ENCODE measurements at regions of chr1 and their contacts with region 1.

Region 1: GRCh38 chr1:80509950-80510522 is 1290.7 kb upstream of the ADGRL2 start:
- DNase-seq: no peak
- ATAC-seq: no peak
- H3K4me3 ChIP-seq: no peak overlapping the region
- H3K4me3 Mint-ChIP-seq: no peak overlapping the region
- H3K27ac ChIP-seq: no peak overlapping the region
- H3K27ac Mint-ChIP-seq: no peak overlapping the region
- H3K4me1 ChIP-seq: no peaks in the 10 kb centered on the region
- H3K4me1 Mint-ChIP-seq: no peaks in the 10 kb centered on the region
- H3K27me3 ChIP-seq: no peaks in the 10 kb centered on the region
- H3K27me3 Mint-ChIP-seq: no peaks in the 10 kb centered on the region

Region 2: GRCh38 chr1:80498673-80499072 is 11.4 kb before region 1 on chr1:
- CTCF ChIA-PET with region 1: interaction called in 1 of 2 experiments, 10 read pairs
- POLR2A ChIA-PET with region 1: interaction called in 1 of 2 experiments, 3 read pairs
- DNase-seq: no peak
- ATAC-seq: no peak
- H3K4me3 ChIP-seq: no peak overlapping the region
- H3K4me3 Mint-ChIP-seq: no peak overlapping the region
- H3K27ac ChIP-seq: no peak overlapping the region
- H3K27ac Mint-ChIP-seq: no peak overlapping the region
- H3K4me1 ChIP-seq: no peaks in the 10 kb centered on the region
- H3K4me1 Mint-ChIP-seq: no peaks in the 10 kb centered on the region
- H3K27me3 ChIP-seq: no peaks in the 10 kb centered on the region
- H3K27me3 Mint-ChIP-seq: no peaks in the 10 kb centered on the region

Region 3: GRCh38 chr1:80523861-80524260 is 13.8 kb after region 1 on chr1:
- CTCF ChIA-PET with region 1: no interaction called
- POLR2A ChIA-PET with region 1: no interaction called
- DNase-seq: no peak
- ATAC-seq: no peak
- H3K4me3 ChIP-seq: no peak overlapping the region
- H3K4me3 Mint-ChIP-seq: no peak overlapping the region
- H3K27ac ChIP-seq: no peak overlapping the region
- H3K27ac Mint-ChIP-seq: no peak overlapping the region
- H3K4me1 ChIP-seq: no peaks in the 10 kb centered on the region
- H3K4me1 Mint-ChIP-seq: no peaks in the 10 kb centered on the region
- H3K27me3 ChIP-seq: peaks cover 0 to 2% of the 10 kb centered on the region in 2 experiments
- H3K27me3 Mint-ChIP-seq: no peaks in the 10 kb centered on the region

Region 4: DNA sequence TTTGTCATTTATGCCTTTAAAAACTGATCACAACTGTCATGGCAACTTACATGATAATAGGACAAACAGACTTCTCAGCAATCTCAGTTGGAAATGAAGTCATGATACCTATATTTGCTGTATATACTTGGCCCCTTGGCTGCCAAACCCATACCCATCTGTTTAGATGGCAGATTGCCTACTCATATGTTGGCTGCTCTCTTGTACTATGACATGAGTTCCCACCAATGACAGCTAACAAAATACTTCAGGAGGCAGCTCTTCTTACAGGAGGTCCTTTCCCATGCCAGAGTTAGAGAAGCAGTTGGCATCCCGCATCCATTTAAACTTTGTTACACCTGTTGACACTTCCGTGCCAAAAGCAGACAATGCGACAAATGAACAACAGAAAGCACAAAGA is 687.6 kb after region 1 on chr1:
- CTCF ChIA-PET with region 1: no interaction called
- POLR2A ChIA-PET with region 1: no interaction called
- DNase-seq: no peak
- ATAC-seq: no peak
- H3K4me3 ChIP-seq: no peak overlapping the region
- H3K4me3 Mint-ChIP-seq: no peak overlapping the region
- H3K27ac ChIP-seq: no peak overlapping the region
- H3K27ac Mint-ChIP-seq: no peak overlapping the region
- H3K4me1 ChIP-seq: no peaks in the 10 kb centered on the region
- H3K4me1 Mint-ChIP-seq: no peaks in the 10 kb centered on the region
- H3K27me3 ChIP-seq: no peaks in the 10 kb centered on the region
- H3K27me3 Mint-ChIP-seq: no peaks in the 10 kb centered on the region

Measured in T-cell (primary cell).